ENCODE measurements at regions of chr4 and their contacts with region 1.

Region 1: GRCh38 chr4:141636082-141636770 is at the start of gene IL15:
- DNase-seq: peak; percentile 76
- H3K4me3 ChIP-seq: peak within 1 kb of the TSS; percentile 77 to 89 (median 80)
- H3K27ac ChIP-seq: peak within 1 kb of the TSS; percentile 64
- H3K4me1 ChIP-seq: peaks cover 14% of the 10 kb centered on the region
- H3K27me3 ChIP-seq: no peaks in the 10 kb centered on the region
- CTCF ChIP-seq: no peak
- total RNA-seq, gene IL15: 1.3 to 3.2 TPM

Region 2: GRCh38 chr4:141375855-141376254 is 260.4 kb before region 1 on chr4:
- CTCF ChIA-PET with region 1: no interaction called
- dilution Hi-C with region 1: no loop called
- in situ Hi-C with region 1: no loop called
- intact Hi-C with region 1: loop called (anchors 5 kb)
- DNase-seq: peak; percentile 83
- H3K4me3 ChIP-seq: no peak overlapping the region
- H3K27ac ChIP-seq: no peak overlapping the region
- H3K4me1 ChIP-seq: peaks cover 4% of the 10 kb centered on the region
- H3K27me3 ChIP-seq: no peaks in the 10 kb centered on the region
- CTCF ChIP-seq: peak; percentile 89 to 99

Region 3: GRCh38 chr4:141464366-141464765 is 171.9 kb before region 1 on chr4:
- CTCF ChIA-PET with region 1: no interaction called
- dilution Hi-C with region 1: no loop called
- in situ Hi-C with region 1: no loop called
- intact Hi-C with region 1: loop called (anchors 10 kb)
- DNase-seq: no peak
- H3K4me3 ChIP-seq: no peak overlapping the region
- H3K27ac ChIP-seq: no peak overlapping the region
- H3K4me1 ChIP-seq: peaks cover 14% of the 10 kb centered on the region
- H3K27me3 ChIP-seq: no peaks in the 10 kb centered on the region
- CTCF ChIP-seq: no peak

Region 4: GRCh38 chr4:141853091-141853764 is 217.0 kb after region 1 on chr4:
- CTCF ChIA-PET with region 1: no interaction called
- dilution Hi-C with region 1: no loop called
- in situ Hi-C with region 1: no loop called
- intact Hi-C with region 1: no loop called
- DNase-seq: peak; percentile 78
- H3K4me3 ChIP-seq: no peak overlapping the region
- H3K27ac ChIP-seq: no peak overlapping the region
- H3K4me1 ChIP-seq: no peaks in the 10 kb centered on the region
- H3K27me3 ChIP-seq: peaks cover 1% of the 10 kb centered on the region
- CTCF ChIP-seq: no peak